Activated CD4-positive, alpha-beta T cell treated with anti-CD3 and anti-CD28 coated beads for 36 hours (primary cell): ENCODE measurements at regions of chr5 and their contacts with region 1.

Region 1: DNA sequence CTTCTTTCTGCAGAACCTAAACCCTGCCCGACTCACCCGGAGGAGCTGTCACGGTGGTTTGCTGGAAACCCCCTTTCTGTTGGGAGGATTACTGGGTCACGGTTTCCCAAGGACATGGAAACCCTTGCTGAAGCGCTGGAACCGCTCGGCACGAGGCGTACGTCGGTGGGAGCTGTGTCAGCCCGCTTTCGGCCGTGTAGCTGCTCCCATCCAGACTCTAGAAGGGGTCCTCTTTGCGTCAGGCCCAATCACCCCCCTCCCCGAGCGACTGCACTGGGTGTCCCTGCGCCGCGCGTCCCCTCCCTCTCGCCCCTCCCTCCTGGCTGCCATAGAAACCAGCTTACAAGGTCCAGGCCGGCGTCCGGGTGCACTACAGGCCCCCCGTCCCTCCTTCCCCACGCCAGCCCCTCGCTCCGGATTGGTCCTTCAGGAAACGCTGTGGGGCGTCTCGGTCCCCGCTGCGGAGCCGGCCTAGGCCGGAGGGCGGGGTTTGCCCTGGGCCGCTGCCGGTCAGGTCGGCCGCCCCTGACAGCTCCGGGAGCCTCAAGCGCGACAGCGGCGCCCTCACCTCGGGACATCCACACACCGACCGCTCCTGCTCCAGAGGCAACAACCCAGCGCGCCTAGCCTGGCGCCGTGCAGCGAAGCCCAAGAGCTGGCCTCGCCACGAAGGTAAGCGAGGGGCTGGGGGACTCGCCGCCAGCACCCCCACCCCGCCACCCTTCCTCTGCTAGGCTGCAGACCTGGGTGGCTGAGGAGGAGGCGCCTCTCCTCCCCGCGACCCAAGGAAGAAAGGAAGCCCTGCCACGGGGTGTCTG is at the start of gene NIM1K:
- DNase-seq: peak; percentile 65
- ATAC-seq: peak; percentile 32
- H3K4me3 Mint-ChIP-seq: peak within 1 kb of the TSS; percentile 79
- H3K27ac Mint-ChIP-seq: peak within 1 kb of the TSS; percentile 73
- H3K4me1 Mint-ChIP-seq: peaks cover 32% of the 10 kb centered on the region
- H3K27me3 Mint-ChIP-seq: peaks cover 16% of the 10 kb centered on the region
- total RNA-seq, gene NIM1K: 2.1 to 2.3 TPM

Region 2: DNA sequence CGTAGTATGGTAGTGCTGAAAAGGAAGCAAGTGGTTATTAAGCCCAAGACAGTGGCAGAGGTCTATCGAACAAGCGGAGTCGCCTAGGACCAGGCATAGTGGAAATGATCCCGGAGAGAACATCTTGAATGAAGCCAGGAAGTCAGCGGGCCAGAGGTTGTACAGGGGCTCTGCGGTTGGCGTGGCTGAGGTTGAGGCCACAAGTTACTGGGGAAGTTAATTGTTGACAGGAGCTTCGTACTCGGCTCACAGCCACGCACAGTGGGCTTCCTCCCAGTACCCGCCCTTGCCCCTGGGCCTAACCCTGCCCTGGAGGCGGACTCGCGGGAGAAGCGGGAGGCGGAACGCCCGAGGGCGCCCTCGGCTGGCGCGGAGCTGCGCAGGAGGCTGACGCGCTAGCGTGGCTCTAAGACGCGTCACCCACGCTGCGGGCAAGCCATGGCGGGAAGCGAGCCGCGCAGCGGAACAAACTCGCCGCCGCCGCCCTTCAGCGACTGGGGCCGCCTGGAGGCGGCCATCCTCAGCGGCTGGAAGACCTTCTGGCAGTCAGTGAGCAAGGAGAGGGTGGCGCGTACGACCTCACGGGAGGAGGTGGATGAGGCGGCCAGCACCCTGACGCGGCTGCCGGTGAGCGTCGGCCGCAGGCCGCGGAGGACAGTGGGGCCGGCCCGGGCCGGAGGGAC is 1266.9 kb before region 1 on chr5 and contains the start of gene FBXO4:
- CTCF ChIA-PET with region 1: no interaction called
- POLR2A ChIA-PET with region 1: no interaction called
- intact Hi-C with region 1: loop called in 1 of 2 experiments (anchors 10 kb)
- DNase-seq: peak; percentile 94
- ATAC-seq: peak; percentile 98
- H3K4me3 Mint-ChIP-seq: peak within 1 kb of the TSS; percentile 85
- H3K27ac Mint-ChIP-seq: peak within 1 kb of the TSS; percentile 99
- H3K4me1 Mint-ChIP-seq: peaks cover 24% of the 10 kb centered on the region
- H3K27me3 Mint-ChIP-seq: no peaks in the 10 kb centered on the region
- total RNA-seq, gene FBXO4: 18.8 to 22.3 TPM

Region 3: DNA sequence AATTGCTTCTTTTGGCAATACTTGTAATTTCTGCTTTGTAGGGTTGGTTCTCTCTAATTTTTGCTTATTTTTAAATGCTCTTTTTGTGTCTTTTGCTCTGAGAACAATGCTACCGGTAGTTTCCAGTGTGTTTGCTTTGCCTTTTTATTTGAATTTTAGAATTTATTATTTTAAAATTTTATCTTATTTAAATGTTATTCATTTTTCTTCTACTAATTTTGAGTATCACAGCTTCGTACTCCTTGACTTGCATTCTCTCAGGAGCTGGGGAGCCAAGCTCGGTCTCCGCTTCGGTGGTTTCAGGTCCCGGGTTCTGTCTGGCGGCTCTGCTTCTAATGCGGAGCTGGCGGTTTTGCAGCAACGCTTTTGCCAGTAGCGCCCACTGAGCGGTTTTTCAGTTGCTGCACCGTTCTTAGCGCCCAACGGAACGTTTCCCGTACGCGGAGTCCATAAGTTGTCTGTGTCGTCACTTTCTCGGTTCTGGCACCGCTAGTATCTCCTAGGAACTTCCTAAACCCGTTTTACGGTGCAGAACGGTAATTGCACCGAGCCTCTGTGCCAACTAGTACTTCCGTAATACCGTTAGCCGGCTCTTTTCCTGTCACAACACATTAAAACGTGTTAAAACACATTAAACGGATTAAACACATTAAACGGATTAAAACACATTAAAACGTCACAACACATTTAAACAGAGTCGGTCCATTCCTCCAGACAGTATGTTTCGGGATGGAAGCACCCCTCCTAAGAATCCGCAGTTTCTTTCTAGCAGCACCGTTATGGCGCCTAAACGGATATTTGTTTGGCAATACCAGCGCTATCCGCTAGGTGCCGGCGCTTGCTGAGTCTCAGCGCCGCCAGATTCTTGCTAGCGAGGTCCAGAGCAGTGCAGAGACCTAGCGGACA is 197.4 kb before region 1 on chr5:
- CTCF ChIA-PET with region 1: no interaction called
- POLR2A ChIA-PET with region 1: no interaction called
- intact Hi-C with region 1: loop called in 1 of 2 experiments (anchors 5 kb)
- DNase-seq: peak; percentile 93
- ATAC-seq: peak; percentile 67
- H3K4me3 Mint-ChIP-seq: peak overlapping the region; percentile 98
- H3K27ac Mint-ChIP-seq: peak overlapping the region; percentile 100
- H3K4me1 Mint-ChIP-seq: peaks cover 25% of the 10 kb centered on the region
- H3K27me3 Mint-ChIP-seq: no peaks in the 10 kb centered on the region

Region 4: DNA sequence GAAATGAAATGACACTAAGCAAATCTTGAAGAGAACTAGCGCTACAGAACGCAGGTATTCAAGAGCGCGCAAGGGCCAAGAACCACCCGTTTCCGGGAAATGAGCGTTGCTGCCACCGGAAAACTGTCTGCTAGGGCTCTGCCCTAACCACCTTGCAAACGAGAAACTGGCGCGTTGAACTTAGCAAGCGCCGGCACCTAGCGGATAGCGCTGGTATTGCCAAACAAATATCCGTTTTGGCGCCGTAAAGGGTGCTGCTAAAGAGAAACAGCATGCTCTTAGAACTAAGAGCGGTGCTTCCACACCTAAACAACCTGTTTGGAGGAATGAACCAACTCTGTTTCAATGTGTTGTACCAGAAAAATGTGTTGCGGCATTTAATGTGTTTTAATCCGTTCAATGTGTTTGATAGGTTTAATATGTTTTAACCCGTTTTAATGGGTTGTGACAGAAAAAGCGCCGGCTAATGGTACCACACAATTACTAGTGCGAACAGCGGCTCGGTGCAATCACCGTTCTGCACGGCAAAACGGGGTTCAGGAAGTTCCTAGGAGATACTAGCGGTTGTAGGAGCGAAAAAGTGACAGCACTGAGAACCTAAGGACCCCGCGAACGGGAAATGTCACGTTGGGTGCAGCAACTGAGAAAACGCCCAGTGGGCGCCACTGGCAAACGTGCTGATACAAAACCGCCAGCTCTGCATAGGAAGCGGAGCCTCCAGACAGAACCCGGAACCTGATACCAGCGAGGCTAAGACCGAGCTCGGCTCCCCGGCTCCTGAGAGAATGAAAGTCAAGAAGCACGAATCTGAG is 151.5 kb before region 1 on chr5 and contains the start of gene ANXA2R:
- CTCF ChIA-PET with region 1: no interaction called
- POLR2A ChIA-PET with region 1: interaction called, 4 read pairs
- intact Hi-C with region 1: loop called in 1 of 2 experiments (anchors 1 kb)
- DNase-seq: peak; percentile 96
- ATAC-seq: peak; percentile 56
- H3K4me3 Mint-ChIP-seq: peak within 1 kb of the TSS; percentile 81
- H3K27ac Mint-ChIP-seq: peak within 1 kb of the TSS; percentile 94
- H3K4me1 Mint-ChIP-seq: peaks cover 39% of the 10 kb centered on the region
- H3K27me3 Mint-ChIP-seq: no peaks in the 10 kb centered on the region
- total RNA-seq, gene ANXA2R: 3.2 to 4.6 TPM

Region 5: GRCh38 chr5:43120720-43121564 is 71.0 kb before region 1 on chr5 and contains the start of gene ZNF131:
- CTCF ChIA-PET with region 1: interaction called, 6 read pairs
- POLR2A ChIA-PET with region 1: interaction called, 13 read pairs
- intact Hi-C with region 1: loop called (anchors 1 to 5 kb)
- DNase-seq: peak; percentile 98
- ATAC-seq: peak; percentile 93
- H3K4me3 Mint-ChIP-seq: peak within 1 kb of the TSS; percentile 94
- H3K27ac Mint-ChIP-seq: peak within 1 kb of the TSS; percentile 94
- H3K4me1 Mint-ChIP-seq: peaks cover 35% of the 10 kb centered on the region
- H3K27me3 Mint-ChIP-seq: no peaks in the 10 kb centered on the region
- total RNA-seq, gene ZNF131: 30.9 to 33.4 TPM

Region 6: GRCh38 chr5:43484106-43484849 is 292.3 kb after region 1 on chr5:
- CTCF ChIA-PET with region 1: interaction called, 13 read pairs
- POLR2A ChIA-PET with region 1: interaction called, 4 read pairs
- intact Hi-C with region 1: loop called in 1 of 2 experiments (anchors 2 kb)
- DNase-seq: peak; percentile 92
- ATAC-seq: peak; percentile 73
- H3K4me3 Mint-ChIP-seq: peak overlapping the region; percentile 97
- H3K27ac Mint-ChIP-seq: peak overlapping the region; percentile 100
- H3K4me1 Mint-ChIP-seq: peaks cover 37% of the 10 kb centered on the region
- H3K27me3 Mint-ChIP-seq: no peaks in the 10 kb centered on the region

Region 7: DNA sequence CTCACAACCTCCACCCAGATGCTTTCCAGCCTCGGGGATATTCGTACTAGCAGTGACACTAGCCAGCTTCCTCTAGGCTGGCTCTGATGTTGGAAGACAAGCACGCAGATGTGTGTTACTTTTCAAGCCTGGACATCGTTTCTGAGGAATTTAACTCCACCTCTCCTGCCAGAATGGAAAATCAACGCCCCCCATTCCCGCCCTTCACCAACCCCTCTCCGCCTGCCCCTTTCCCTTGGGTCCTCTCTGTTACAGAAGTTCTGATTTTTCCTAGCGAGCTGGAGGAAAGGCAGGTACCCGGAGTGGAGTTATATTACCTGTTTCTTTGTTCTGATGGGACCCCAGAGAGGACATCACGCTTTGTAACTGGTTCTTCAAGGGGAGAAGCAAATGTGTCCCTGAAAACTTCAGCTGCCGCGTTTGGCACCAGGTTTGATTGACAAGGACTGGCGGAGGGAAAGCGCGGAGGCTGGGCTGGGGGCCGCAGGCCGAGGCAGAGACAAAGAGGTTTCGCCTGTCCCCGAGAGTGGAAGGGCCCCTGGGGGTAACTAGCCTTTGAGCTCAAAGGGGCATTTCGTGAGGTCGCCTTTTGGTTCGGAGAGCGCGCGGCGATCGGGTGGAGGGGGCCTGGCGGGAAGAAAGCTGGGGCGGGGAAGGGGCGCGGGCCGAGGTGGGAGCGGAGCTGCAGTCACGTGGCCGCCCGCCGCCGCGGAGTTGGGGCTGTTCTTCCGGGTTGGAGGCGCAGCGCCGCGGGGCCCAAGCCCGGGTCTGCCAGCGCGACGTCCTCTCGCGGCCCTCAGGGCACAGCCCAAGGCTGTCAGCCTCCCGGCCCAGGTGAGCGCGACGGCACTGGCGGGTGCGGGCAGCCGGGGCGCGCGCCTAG is 410.8 kb after region 1 on chr5 and contains the start of gene NNT:
- CTCF ChIA-PET with region 1: no interaction called
- POLR2A ChIA-PET with region 1: no interaction called
- intact Hi-C with region 1: loop called in 1 of 2 experiments (anchors 2 kb)
- DNase-seq: peak; percentile 89
- ATAC-seq: peak; percentile 76
- H3K4me3 Mint-ChIP-seq: peak within 1 kb of the TSS; percentile 95
- H3K27ac Mint-ChIP-seq: peak within 1 kb of the TSS; percentile 93
- H3K4me1 Mint-ChIP-seq: peaks cover 29% of the 10 kb centered on the region
- H3K27me3 Mint-ChIP-seq: no peaks in the 10 kb centered on the region
- total RNA-seq, gene NNT: 55.4 to 77.5 TPM